Mammary epithelial cell (primary cell): ENCODE measurements at regions of chr12 and their contacts with region 1.

Region 1: DNA sequence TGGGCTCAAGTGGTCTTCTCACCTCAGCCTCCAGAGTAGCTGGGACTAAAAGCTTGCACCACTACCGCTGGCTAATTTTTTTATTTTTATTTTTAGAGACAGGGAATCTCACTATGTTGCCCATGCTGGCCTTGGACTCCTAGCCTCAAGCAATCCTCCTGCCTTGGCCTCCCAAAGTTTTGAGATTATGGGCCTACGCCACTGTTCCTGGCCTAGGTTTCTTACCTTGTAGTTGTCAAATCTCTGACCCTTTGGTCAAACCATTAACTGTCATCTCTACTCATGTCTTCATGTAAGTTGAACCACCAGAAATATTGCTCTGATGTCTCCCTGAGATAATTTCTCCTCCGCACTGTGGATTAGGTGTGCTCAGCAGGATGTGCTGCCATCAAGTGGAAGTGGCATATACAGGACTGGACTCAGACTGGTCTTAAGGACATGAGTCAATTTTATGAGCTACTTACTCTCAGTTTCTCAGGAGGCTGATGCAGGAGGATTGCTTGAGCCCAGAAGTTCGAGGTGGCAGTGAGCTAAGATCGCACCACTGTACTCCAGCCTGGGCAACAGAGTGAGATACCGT is 28.5 kb downstream of the ACTR6 start:
- DNase-seq: peak; percentile 46
- H3K4me3 ChIP-seq: no peak overlapping the region
- H3K27ac ChIP-seq: no peak overlapping the region
- H3K4me1 ChIP-seq: peaks cover 17% of the 10 kb centered on the region
- H3K27me3 ChIP-seq: no peaks in the 10 kb centered on the region
- CTCF ChIP-seq: peak in 1 of 2 donors; percentile 45

Region 2: DNA sequence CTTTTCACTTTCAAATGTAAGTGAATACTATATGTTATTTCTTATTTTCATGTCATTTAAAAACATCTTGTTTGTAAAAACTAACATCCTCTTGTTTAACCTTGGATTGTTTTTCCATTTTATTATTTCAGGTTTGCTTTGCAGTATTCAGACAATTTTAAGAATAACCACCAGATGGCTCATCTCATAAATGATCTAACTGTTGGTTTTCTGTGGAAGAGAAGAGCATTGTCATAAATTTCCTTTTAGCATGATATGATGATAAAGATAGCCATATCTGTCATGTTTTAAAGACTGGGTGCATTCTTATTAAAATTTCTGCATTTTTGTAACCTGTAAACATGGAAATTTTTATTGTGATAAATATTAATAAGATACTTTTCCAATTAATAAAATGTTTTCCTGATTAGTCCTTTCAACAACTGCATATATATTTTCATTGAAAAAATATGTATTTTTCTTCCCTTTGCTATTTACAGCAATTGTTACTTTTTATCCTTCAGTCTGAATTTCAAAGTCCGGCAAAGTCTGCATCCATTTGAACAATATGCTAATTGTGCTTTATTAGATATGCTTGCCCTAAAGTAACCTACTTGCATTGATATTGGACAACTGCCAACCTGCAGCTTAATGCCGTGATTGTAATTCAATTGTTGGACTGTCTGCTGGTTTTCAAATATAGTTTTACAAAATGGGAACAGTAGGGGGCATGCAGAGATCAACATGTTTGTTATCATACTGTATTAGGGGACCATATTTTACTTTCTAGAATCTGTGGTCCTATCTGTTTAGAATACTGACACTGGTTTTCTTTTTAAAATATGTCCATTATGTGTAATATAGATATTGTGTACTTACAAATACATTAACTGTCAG is 418.2 kb before region 1 on chr12:
- CTCF ChIA-PET with region 1: no interaction called
- dilution Hi-C with region 1: no loop called
- in situ Hi-C with region 1: no loop called
- intact Hi-C with region 1: loop called (anchors 2 kb)
- DNase-seq: peak; percentile 4
- H3K4me3 ChIP-seq: no peak overlapping the region
- H3K27ac ChIP-seq: no peak overlapping the region
- H3K4me1 ChIP-seq: no peaks in the 10 kb centered on the region
- H3K27me3 ChIP-seq: peaks cover 2% of the 10 kb centered on the region
- CTCF ChIP-seq: peak; percentile 23 to 44

Region 3: DNA sequence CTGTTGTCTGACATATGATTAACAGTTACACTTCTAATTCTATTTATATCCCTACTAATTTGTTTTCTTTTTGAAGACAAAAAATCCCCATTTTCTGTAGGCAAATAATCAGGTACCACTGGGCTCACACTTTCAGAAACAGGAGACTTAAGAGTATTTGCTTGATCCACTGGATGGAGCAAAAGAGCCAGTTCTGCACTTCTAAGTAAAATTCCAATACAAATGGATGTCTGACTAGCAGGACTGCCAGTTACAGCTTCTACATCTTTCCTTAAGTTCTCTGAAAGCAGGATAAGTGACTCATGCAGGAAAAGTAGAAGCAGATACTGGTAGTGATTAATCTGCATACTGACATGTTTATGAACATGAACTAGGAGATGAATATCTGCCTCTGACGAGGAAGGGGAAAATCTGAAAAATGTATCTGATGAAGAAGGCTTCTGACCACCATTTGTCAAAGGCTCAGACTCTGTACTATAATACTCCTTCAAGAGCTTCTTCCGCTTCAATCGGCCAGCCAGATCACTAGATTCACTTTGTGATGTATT is 170.6 kb before region 1 on chr12:
- CTCF ChIA-PET with region 1: no interaction called
- dilution Hi-C with region 1: no loop called
- in situ Hi-C with region 1: no loop called
- intact Hi-C with region 1: loop called (anchors 2 kb)
- DNase-seq: peak; percentile 86
- H3K4me3 ChIP-seq: no peak overlapping the region
- H3K27ac ChIP-seq: no peak overlapping the region
- H3K4me1 ChIP-seq: peaks cover 3% of the 10 kb centered on the region
- H3K27me3 ChIP-seq: no peaks in the 10 kb centered on the region
- CTCF ChIP-seq: peak; percentile 15 to 32

Region 4: DNA sequence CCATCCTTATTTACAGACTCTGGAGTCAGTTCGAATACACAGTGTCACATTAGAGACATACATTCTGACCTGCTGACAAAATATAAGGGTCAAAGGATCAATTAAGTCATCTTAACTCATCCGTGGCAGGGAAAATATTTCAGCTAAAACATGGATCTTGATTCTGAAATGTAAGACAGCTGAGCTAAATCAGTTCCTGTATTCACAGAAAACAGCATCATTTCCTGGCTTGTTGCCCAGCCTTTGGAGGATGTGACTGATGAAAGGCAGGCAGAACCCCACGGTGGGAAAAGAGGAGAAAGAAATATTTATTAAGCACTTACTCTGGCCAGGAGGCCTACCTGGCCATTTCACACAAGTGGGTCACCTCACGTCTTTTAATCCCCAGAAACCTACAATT is 446.3 kb after region 1 on chr12:
- CTCF ChIA-PET with region 1: no interaction called
- dilution Hi-C with region 1: no loop called
- in situ Hi-C with region 1: no loop called
- intact Hi-C with region 1: no loop called
- DNase-seq: peak; percentile 40
- H3K4me3 ChIP-seq: no peak overlapping the region
- H3K27ac ChIP-seq: no peak overlapping the region
- H3K4me1 ChIP-seq: no peaks in the 10 kb centered on the region
- H3K27me3 ChIP-seq: no peaks in the 10 kb centered on the region
- CTCF ChIP-seq: no peak